ENCODE measurements at regions of chr13 and their contacts with region 1.

Region 1: GRCh38 chr13:32381539-32381938 is 46.4 kb downstream of the N4BP2L1 start:
- DNase-seq: no peak
- H3K4me3 ChIP-seq: no peak overlapping the region
- H3K27ac ChIP-seq: no peak overlapping the region
- H3K4me1 ChIP-seq: no peaks in the 10 kb centered on the region
- H3K27me3 ChIP-seq: no peaks in the 10 kb centered on the region
- CTCF ChIP-seq: peak; percentile 73

Region 2: DNA sequence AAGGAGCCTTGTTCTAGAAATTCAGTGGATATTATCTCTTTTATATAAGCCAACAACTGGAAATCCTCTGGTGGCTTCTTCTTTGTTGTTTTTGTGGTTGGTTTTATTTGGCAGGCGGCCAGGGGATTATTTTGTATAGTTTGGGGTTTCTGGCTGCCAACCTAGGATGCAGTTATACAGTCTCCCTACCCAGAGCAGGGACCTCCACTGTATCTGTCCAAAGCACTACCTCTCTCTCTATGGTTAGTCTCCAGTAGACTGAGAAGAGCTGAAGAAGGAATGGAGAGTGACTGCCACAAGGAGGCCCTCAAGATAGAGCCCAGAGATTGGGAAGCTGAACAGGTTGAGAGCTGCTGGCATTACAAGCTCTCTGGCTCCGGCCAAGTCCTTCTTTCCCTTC is 146.6 kb before region 1 on chr13:
- intact Hi-C with region 1: no loop called
- DNase-seq: no peak
- H3K4me3 ChIP-seq: no peak overlapping the region
- H3K27ac ChIP-seq: peak overlapping the region; percentile 16
- H3K4me1 ChIP-seq: peaks cover 41% of the 10 kb centered on the region
- H3K27me3 ChIP-seq: no peaks in the 10 kb centered on the region
- CTCF ChIP-seq: no peak

Region 3: DNA sequence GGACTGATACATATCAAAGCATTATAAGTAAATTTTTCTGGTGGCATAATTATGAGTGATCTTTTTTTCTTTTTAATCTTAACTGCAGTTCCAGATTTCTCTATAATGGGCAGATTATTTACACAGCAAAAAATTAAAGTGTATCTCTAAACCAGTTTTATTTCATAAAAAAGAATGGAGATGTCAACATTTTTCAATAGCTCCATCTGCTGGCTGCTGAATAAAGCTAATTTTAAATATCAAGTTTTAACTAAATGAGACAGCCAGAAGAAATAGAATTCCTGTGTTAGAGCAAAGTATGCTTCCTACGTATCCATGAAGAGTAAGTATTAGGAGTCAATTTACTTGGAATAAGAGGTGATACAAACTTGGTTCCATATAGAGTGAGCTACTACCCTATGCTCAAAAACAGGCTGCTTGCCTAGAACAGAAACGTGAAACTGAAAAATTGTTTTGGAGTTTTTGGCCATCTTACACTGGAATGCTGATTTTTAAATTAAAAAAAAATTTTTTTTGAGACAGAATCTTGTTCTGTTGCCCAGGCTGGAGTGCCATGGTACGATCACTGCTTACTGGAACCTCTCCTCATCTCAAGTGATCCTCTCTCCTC is 199.7 kb after region 1 on chr13:
- intact Hi-C with region 1: loop called (anchors 5 kb)
- DNase-seq: no peak
- H3K4me3 ChIP-seq: no peak overlapping the region
- H3K27ac ChIP-seq: no peak overlapping the region
- H3K4me1 ChIP-seq: peaks cover 8% of the 10 kb centered on the region
- H3K27me3 ChIP-seq: no peaks in the 10 kb centered on the region
- CTCF ChIP-seq: peak; percentile 65

Region 4: DNA sequence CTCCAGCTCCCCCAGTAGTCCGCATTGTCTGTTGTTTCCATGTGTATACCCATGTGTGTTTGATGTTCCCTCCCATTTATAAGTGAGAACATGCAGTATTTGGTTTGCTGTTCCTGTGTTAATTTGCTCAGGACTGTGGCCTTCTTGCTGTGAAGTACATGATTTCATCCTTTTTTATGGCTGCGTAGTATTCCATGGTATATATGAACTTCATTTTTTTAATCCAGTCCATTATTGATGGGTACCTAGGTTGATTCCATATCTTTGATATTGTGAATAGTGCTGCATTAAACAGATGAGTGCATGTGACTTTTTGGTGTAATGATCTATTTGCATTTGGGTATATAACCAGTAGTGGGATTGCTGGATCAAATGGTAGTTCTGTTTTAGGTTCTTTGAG is 379.9 kb after region 1 on chr13:
- intact Hi-C with region 1: no loop called
- DNase-seq: no peak
- H3K4me3 ChIP-seq: no peak overlapping the region
- H3K27ac ChIP-seq: no peak overlapping the region
- H3K4me1 ChIP-seq: no peaks in the 10 kb centered on the region
- H3K27me3 ChIP-seq: no peaks in the 10 kb centered on the region
- CTCF ChIP-seq: no peak